ENCODE measurements at regions of chr20 and their contacts with region 1.

Region 1: DNA sequence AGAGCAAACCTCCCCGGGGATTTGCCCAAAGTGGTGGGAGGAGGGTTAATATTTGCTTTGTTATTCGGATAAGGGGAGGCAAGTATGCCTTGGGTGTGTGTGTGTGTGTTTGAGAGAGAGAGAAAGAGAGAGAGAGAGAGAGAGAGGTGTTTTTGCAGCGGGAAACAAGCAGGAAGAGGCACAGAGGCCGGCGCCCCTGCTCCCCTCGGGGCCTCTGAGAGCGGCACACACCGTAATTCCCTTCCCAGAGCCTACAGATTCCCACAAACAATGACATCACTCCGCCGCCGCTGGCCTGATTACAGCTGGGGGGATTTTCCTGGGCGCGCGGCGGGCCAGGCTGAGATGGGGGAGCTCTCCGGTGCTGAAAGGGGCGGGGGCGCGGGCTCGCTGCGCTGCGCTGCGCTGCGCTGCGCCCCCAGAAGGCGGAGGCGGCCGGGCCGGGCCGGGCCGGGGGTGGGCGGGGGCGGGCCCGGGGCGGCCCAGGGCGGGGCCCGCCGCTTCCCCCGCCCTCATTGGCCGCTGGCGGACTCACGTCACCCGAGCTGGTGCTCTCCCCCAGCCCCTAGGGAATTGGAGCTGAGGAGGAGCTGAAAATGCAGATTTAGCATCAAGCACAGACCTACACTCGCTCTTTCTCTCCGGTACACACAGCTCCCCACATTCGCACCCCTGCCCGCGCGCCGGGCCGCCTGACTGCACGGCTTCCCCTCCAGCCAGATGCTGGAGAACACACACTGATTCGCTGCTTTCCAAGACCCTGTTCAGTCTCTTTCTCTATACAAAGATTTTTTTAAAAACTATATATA is at the start of gene PCSK2:
- DNase-seq: peak; percentile 30 to 86 (median 69)
- H3K4me3 ChIP-seq: peak within 1 kb of the TSS; percentile 43 to 77 (median 63)
- H3K27ac ChIP-seq: peak within 1 kb of the TSS in 58 of 59 donors; percentile 2 to 89 (median 78)
- H3K27me3 ChIP-seq: peaks cover 0 to 26% (median 0%) of the 10 kb centered on the region in 45 donors
- CTCF ChIP-seq: no peak
- total RNA-seq, gene PCSK2: 24.6 to 130 (median 89.3) TPM

Region 2: GRCh38 chr20:16801919-16802911 is 424.4 kb before region 1 on chr20:
- intact Hi-C with region 1: loop called in 1 of 2 experiments (anchors 10 kb)
- DNase-seq: peak; percentile 64 to 92 (median 76)
- H3K4me3 ChIP-seq: peak overlapping the region in 21 of 59 donors; percentile 1 to 40 (median 24)
- H3K27ac ChIP-seq: peak overlapping the region in 7 of 59 donors; percentile 3 to 46 (median 33)
- H3K27me3 ChIP-seq: peaks cover 0 to 58% (median 0%) of the 10 kb centered on the region in 45 donors
- CTCF ChIP-seq: peak; percentile 77 to 98 (median 90)

Region 3: GRCh38 chr20:16955971-16956370 is 270.6 kb before region 1 on chr20:
- intact Hi-C with region 1: loop called in 1 of 2 experiments (anchors 5 kb)
- DNase-seq: peak in 3 of 10 donors; percentile 39 to 48 (median 40)
- H3K4me3 ChIP-seq: no peak overlapping the region
- H3K27ac ChIP-seq: peak overlapping the region in 48 of 59 donors; percentile 1 to 87 (median 57)
- H3K27me3 ChIP-seq: no peaks in the 10 kb centered on the region
- CTCF ChIP-seq: no peak

Region 4: GRCh38 chr20:17093782-17094181 is 132.8 kb before region 1 on chr20:
- intact Hi-C with region 1: no loop called
- DNase-seq: peak in 1 of 10 donors; percentile 45
- H3K4me3 ChIP-seq: no peak overlapping the region
- H3K27ac ChIP-seq: no peak overlapping the region
- H3K27me3 ChIP-seq: peaks cover 0 to 3% (median 0%) of the 10 kb centered on the region in 45 donors
- CTCF ChIP-seq: no peak

Region 5: GRCh38 chr20:17189976-17190695 is 36.5 kb before region 1 on chr20:
- intact Hi-C with region 1: no loop called
- DNase-seq: no peak
- H3K4me3 ChIP-seq: no peak overlapping the region
- H3K27ac ChIP-seq: no peak overlapping the region
- H3K27me3 ChIP-seq: no peaks in the 10 kb centered on the region
- CTCF ChIP-seq: no peak

Region 6: DNA sequence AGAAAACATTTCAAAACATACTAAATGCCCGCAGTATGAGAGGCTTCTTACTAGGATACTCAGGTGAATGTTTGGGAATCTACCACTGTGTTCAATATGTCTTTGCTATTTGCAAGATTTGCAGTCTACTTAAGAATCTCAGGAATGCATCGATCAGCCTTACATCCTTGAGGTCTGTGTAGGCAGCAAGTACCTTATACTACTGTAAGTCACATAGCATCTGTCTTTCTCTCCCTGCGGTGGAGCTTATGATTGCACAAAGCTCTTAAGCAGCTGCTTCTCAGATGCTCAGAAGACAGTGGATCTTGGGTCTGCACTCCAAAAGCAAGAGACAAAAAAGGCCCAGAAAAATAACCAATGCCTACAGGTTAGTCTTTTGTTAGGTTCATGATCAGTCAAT is 21.6 kb after region 1 on chr20:
- intact Hi-C with region 1: no loop called
- DNase-seq: no peak
- H3K4me3 ChIP-seq: no peak overlapping the region
- H3K27ac ChIP-seq: no peak overlapping the region
- H3K27me3 ChIP-seq: no peaks in the 10 kb centered on the region
- CTCF ChIP-seq: no peak

Region 7: DNA sequence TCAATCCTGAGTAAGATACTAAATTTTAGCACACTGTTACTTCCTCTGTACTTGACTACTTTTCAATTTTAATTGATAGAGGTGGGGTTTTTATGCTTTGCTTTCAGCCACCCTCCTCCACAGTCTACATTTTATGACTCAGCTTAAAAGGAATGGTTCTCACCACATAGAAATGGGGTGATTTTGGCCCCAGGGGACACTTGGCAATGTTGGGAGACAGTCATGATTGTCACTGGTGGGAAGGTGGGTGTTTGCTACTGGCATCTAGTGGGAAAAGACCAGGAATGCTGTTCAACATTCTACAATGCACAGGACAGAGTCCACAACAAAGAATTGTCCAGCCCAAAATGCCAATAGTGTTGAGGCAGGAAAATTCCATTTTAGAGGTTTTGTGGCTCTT is 71.6 kb after region 1 on chr20:
- intact Hi-C with region 1: no loop called
- DNase-seq: no peak
- H3K4me3 ChIP-seq: no peak overlapping the region
- H3K27ac ChIP-seq: no peak overlapping the region
- H3K27me3 ChIP-seq: no peaks in the 10 kb centered on the region
- CTCF ChIP-seq: no peak

Region 8: GRCh38 chr20:17421493-17421892 is 194.9 kb after region 1 on chr20:
- intact Hi-C with region 1: loop called in 1 of 2 experiments (anchors 10 kb)
- DNase-seq: no peak
- H3K4me3 ChIP-seq: no peak overlapping the region
- H3K27ac ChIP-seq: no peak overlapping the region
- H3K27me3 ChIP-seq: peaks cover 0 to 5% (median 0%) of the 10 kb centered on the region in 45 donors
- CTCF ChIP-seq: no peak

Region 9: GRCh38 chr20:17431621-17432364 is 205.2 kb after region 1 on chr20:
- intact Hi-C with region 1: loop called (anchors 10 kb)
- DNase-seq: peak; percentile 53 to 79 (median 70)
- H3K4me3 ChIP-seq: no peak overlapping the region
- H3K27ac ChIP-seq: peak overlapping the region in 34 of 59 donors; percentile 6 to 75 (median 51)
- H3K27me3 ChIP-seq: peaks cover 0 to 5% (median 0%) of the 10 kb centered on the region in 45 donors
- CTCF ChIP-seq: peak; percentile 84 to 97 (median 94)